Mammary epithelial cell (primary cell): ENCODE measurements at regions of chr13 and their contacts with region 1.

Region 1: GRCh38 chr13:112133499-112134390 is 66.8 kb downstream of the SOX1 start:
- DNase-seq: no peak
- H3K4me3 ChIP-seq: no peak overlapping the region
- H3K27ac ChIP-seq: no peak overlapping the region
- H3K4me1 ChIP-seq: no peaks in the 10 kb centered on the region
- H3K27me3 ChIP-seq: no peaks in the 10 kb centered on the region
- CTCF ChIP-seq: no peak

Region 2: DNA sequence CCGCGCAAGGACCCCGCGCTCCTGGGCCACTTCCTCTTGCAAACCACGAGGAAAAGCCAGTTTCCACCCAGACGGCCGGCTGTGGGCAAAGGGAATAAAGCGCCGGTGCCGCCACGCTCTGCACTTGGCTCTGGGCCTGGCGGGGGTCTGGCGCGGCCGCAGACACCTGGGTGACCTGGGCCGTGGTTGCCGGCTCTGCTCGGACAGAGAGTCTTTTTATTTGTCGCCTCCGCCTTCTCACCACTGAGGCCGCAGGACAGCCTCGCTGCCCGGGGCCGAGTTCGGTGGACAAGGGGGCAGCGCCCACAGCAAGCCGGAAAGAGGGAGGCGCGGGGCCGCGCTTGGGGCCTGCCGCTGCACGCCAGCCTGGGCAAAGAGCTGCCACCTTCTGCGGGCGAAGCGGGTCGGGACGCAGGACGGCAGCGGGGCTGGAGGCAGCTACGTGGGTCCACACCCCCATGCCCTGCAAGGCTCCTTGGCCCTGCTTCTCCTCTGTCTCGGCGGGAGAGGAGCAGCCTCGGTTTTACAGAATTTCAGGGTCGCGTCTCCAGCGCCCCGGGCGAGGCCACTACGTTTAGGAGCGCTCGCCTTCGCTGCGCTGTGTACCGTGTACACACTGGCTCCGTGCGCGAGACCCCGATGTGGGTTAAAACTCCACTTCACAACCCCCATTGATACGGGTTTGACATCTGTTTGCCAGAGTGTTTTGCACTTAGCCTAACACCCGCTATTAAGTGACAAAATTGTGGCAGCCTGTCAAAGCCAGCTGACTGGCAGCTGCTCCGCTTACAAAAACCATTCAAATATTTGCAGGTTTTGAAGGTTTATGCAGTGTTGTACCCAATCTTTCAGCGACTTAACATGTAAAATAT is 79.8 kb before region 1 on chr13:
- CTCF ChIA-PET with region 1: no interaction called
- dilution Hi-C with region 1: loop called (anchors 5 kb)
- in situ Hi-C with region 1: no loop called
- intact Hi-C with region 1: no loop called
- DNase-seq: no peak
- H3K4me3 ChIP-seq: no peak overlapping the region
- H3K27ac ChIP-seq: no peak overlapping the region
- H3K4me1 ChIP-seq: no peaks in the 10 kb centered on the region
- H3K27me3 ChIP-seq: peaks cover 47% of the 10 kb centered on the region
- CTCF ChIP-seq: no peak

Region 3: DNA sequence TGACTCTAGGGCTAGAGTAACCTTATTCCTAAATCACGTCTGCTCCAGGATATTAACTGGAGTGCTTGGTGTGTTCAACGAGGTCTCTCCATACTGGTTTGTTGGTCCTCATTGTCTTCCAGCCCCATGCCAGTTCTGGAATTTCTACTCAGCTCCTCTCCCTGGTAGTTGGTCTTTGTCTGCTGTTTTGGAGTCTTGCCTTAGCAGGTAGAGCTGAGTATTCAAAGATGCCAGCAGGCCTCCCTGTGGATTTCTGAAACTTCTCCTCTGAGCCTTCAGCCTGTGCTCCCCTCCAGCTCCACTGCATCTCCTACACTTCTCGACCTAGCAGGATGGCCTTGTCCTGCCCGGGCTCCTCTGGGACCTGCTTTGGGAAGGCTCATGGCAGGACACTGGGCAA is 41.3 kb before region 1 on chr13:
- CTCF ChIA-PET with region 1: no interaction called
- dilution Hi-C with region 1: loop called (anchors 5 kb)
- in situ Hi-C with region 1: no loop called
- intact Hi-C with region 1: no loop called
- DNase-seq: no peak
- H3K4me3 ChIP-seq: no peak overlapping the region
- H3K27ac ChIP-seq: no peak overlapping the region
- H3K4me1 ChIP-seq: no peaks in the 10 kb centered on the region
- H3K27me3 ChIP-seq: no peaks in the 10 kb centered on the region
- CTCF ChIP-seq: no peak